ENCODE measurements at regions of chr1 and their contacts with region 1.

Region 1: DNA sequence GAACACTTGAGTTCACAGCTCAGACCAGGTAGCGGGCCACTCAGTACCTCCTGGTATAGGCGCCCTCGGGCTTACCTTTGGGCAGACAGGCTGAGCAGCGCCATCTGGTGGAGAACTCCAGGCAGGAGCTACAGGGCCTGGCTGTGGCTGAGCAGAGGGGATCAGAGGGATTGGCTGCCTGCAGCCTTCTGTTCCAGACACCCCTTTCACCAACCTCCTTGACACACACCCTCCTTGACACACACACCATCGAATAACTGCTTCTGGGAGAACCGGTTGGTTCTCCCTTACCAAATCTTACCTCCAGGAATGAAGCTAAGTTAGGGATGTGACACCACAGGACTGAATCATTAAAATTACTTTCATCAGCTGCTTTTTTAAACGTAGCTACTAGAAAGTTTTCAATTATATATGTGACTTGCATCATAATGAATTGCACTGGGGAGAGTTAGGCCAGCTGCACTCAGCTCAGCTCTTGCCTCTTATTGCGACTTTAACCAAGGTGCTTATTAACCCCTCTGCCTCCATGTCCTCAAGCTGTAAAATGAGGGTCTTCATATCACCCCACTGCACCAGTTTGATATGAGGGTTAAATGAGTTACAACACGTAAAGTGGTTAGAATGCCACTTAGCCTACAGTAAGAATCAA is 6.6 kb downstream of the LIN28A start:
- DNase-seq: peak; percentile 93
- ATAC-seq: peak; percentile 100
- H3K4me3 Mint-ChIP-seq: no peak overlapping the region
- H3K27ac Mint-ChIP-seq: no peak overlapping the region
- H3K4me1 Mint-ChIP-seq: no peaks in the 10 kb centered on the region
- H3K27me3 Mint-ChIP-seq: peaks cover 24% of the 10 kb centered on the region
- CTCF ChIP-seq: peak; percentile 82

Region 2: DNA sequence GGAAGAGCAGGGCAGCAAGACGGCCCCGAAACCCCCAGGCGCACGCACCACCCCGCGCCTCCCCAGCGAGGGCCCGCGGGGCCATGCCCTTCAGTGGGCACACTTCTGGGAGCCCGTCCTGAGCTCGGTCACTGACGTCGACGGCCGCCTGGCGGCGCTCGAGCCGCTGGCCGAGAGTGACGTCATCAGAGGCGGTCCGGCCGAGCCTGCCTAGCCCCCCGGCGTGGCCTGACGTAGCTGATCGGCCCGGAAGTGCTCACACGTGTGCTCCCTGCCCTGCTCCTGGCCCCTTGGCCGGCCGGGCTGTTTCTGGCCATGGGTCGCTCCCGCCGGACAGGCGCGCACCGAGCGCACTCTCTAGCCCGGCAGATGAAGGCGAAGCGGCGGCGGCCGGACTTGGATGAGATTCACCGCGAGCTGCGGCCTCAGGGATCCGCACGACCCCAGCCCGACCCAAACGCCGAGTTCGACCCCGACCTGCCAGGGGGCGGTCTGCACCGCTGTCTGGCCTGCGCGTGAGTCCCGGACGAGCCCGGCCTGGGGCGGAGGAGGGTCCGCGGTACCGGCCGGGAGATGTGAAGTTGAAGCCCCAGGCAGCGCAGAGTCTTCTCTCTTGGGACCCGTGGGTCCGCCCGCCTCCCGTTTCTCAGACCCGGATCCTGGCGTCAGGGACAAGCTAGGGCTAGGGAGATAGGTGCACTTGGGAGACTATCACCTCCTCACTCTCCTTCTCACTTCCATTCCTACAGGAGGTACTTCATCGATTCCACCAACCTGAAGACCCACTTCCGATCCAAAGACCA is 247.4 kb before region 1 on chr1 and contains the start of gene ZNF593:
- CTCF ChIA-PET with region 1: interaction called, 10 read pairs
- POLR2A ChIA-PET with region 1: no interaction called
- intact Hi-C with region 1: no loop called
- DNase-seq: peak; percentile 92
- ATAC-seq: peak; percentile 97
- H3K4me3 Mint-ChIP-seq: peak within 1 kb of the TSS; percentile 91
- H3K27ac Mint-ChIP-seq: peak within 1 kb of the TSS; percentile 90
- H3K4me1 Mint-ChIP-seq: peaks cover 11% of the 10 kb centered on the region
- H3K27me3 Mint-ChIP-seq: peaks cover under 1% of the 10 kb centered on the region
- CTCF ChIP-seq: peak; percentile 84
- total RNA-seq, gene ZNF593: 40.9 to 41.1 TPM

Region 3: GRCh38 chr1:26279456-26280332 is 137.5 kb before region 1 on chr1 and contains the start of gene SH3BGRL3:
- CTCF ChIA-PET with region 1: interaction called, 27 read pairs
- POLR2A ChIA-PET with region 1: no interaction called
- intact Hi-C with region 1: no loop called
- DNase-seq: peak; percentile 88
- ATAC-seq: peak; percentile 51
- H3K4me3 Mint-ChIP-seq: peak within 1 kb of the TSS; percentile 88
- H3K27ac Mint-ChIP-seq: peak within 1 kb of the TSS; percentile 99
- H3K4me1 Mint-ChIP-seq: peaks cover 83% of the 10 kb centered on the region
- H3K27me3 Mint-ChIP-seq: no peaks in the 10 kb centered on the region
- CTCF ChIP-seq: no peak
- total RNA-seq, gene SH3BGRL3: 309 to 316 TPM

Region 4: DNA sequence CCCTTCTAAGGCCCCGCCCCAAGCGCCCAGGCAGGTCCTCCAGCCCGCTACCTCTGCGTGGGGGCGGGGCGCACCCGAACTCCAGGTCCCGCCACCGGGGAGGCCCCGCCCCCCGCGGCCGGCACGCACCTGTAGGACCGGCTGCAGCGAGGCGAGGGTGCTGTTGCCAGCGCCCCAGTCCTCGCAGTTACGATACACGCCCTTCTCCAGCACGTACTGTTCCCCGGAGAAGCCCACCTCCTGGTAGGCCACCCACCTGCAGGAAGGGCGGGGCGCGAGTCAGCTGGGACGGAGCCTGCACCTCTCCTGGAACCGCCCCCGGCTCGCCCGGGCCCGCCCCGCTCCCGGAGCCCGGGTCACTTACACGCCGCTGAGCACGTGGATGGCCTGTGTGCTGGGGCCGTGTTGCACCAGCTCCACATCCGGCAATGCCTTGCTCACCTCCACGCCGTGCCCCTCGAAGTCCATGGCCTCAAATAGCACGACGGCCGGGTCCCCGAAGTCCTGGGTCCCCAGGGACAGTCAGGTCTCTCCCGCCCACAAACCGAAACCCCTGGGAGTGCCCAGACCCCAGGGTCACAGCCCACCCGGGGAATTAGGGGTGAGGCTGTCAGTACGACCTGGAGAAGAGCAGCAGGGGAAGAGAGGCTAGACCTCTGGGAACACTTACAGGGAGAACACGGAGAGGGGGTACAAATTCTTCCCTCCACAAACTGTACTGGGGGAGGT is 80.6 kb before region 1 on chr1:
- CTCF ChIA-PET with region 1: interaction called, 10 read pairs
- POLR2A ChIA-PET with region 1: interaction called, 3 read pairs
- intact Hi-C with region 1: no loop called
- DNase-seq: peak; percentile 89
- ATAC-seq: peak; percentile 96
- H3K4me3 Mint-ChIP-seq: peak overlapping the region; percentile 87
- H3K27ac Mint-ChIP-seq: no peak overlapping the region
- H3K4me1 Mint-ChIP-seq: peaks cover 11% of the 10 kb centered on the region
- H3K27me3 Mint-ChIP-seq: no peaks in the 10 kb centered on the region
- CTCF ChIP-seq: no peak

Region 5: DNA sequence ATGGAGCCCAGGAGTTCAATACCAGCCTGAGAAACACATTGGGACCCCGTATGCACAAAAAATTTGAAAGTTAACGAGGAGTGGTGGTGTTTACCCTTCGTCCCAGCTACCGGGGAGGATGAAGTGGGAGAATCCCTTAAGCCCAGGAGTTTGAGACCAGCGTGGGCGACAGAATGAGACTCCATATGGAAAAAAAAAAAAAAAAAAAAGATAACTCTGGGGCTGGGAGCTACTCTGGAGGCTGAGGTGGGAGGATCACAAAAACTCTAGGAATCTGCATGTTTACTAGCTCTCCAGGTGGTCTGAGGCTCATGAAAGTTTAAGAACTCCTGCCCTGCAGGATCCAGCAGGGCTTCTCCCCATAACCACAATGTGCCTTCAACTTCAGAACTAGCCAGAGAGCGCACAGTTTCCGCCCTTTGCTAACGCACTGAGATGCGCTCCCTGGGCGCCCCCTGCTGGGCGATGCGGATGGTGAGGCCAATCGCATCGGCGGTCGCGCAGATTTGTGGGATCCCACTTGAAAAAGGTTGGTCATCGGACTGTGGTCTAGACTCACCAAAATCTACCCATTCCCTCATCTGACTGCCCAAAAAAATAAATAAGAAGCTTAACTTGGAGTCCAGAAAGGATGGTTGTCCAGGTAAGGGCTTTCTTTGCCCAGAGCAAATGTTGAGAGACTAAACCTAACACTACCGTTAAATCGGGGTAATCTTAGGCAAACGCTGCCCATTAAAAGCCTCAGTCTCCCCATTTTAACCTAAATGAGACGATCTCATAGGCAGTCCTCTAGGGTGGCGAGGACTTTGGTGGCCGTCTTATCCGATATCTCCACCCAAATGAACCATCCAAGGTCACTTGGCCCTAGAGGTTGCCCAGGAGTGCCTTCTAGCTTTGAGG is 53.4 kb before region 1 on chr1:
- CTCF ChIA-PET with region 1: interaction called, 53 read pairs
- POLR2A ChIA-PET with region 1: interaction called, 4 read pairs
- intact Hi-C with region 1: no loop called
- DNase-seq: peak; percentile 94
- ATAC-seq: peak; percentile 70
- H3K4me3 Mint-ChIP-seq: no peak overlapping the region
- H3K27ac Mint-ChIP-seq: no peak overlapping the region
- H3K4me1 Mint-ChIP-seq: peaks cover 43% of the 10 kb centered on the region
- H3K27me3 Mint-ChIP-seq: peaks cover 17% of the 10 kb centered on the region
- CTCF ChIP-seq: peak; percentile 98

Region 6: DNA sequence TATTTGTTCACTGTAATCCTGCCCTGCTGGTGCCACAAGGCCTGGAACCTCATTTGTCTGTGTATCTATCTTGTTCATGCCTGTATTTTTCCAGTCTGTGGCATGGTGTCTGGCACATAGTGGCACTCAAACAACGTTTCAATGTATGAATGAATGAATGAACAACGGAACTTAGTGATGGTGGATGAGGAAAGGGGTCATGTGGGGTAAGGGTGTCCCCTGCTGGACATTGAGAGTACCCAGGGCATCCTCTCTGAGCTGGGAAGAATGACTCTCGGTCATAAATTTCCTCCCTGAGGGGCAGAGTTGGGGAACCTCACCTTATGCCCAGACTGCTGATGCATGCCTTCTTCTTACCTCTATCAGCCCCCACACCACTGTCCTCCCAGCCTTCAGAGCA is 25.8 kb before region 1 on chr1:
- CTCF ChIA-PET with region 1: interaction called, 30 read pairs
- POLR2A ChIA-PET with region 1: no interaction called
- intact Hi-C with region 1: no loop called
- DNase-seq: peak; percentile 71
- ATAC-seq: peak; percentile 69
- H3K4me3 Mint-ChIP-seq: no peak overlapping the region
- H3K27ac Mint-ChIP-seq: no peak overlapping the region
- H3K4me1 Mint-ChIP-seq: peaks cover 40% of the 10 kb centered on the region
- H3K27me3 Mint-ChIP-seq: no peaks in the 10 kb centered on the region
- CTCF ChIP-seq: peak; percentile 82

Region 7: GRCh38 chr1:26440259-26440658 is 23.0 kb after region 1 on chr1:
- CTCF ChIA-PET with region 1: interaction called, 56 read pairs
- POLR2A ChIA-PET with region 1: no interaction called
- intact Hi-C with region 1: no loop called
- DNase-seq: no peak
- ATAC-seq: no peak
- H3K4me3 Mint-ChIP-seq: no peak overlapping the region
- H3K27ac Mint-ChIP-seq: no peak overlapping the region
- H3K4me1 Mint-ChIP-seq: no peaks in the 10 kb centered on the region
- H3K27me3 Mint-ChIP-seq: no peaks in the 10 kb centered on the region
- CTCF ChIP-seq: no peak

Region 8: DNA sequence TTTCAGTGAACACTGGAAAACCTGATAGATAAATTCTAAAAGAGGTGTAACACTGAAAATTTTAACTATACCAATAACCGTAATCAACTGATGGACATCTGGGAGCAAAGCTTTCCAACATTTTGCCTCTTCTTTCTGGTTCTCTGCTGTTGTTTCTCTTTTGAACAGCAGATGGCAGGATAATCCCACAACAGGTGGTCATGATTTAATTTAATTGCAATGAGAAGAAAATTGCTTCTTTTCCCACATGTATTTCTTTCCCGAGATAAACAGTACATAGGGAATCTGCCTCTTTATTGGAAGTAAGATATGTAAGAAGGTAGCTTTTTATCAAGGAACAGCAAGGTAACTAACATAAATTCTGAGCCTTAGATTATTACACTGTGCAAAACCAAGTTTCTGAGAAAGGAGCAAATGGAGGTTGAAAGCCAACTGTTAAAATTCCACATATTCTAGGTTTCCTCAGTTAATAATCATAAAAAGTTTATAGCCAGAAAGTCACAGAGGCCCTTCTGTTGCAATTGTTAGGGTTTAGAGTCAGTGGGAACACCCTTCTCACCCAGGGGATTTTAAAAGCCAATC is 185.2 kb after region 1 on chr1:
- CTCF ChIA-PET with region 1: no interaction called
- POLR2A ChIA-PET with region 1: no interaction called
- intact Hi-C with region 1: no loop called
- DNase-seq: peak; percentile 52
- ATAC-seq: peak; percentile 71
- H3K4me3 Mint-ChIP-seq: no peak overlapping the region
- H3K27ac Mint-ChIP-seq: no peak overlapping the region
- H3K4me1 Mint-ChIP-seq: peaks cover 17% of the 10 kb centered on the region
- H3K27me3 Mint-ChIP-seq: no peaks in the 10 kb centered on the region
- CTCF ChIP-seq: peak; percentile 100

Measured in activated CD8-positive, alpha-beta T cell treated with anti-CD3 and anti-CD28 coated beads for 36 hours (primary cell).